ENCODE measurements at regions of chr2 and their contacts with region 1.

Region 1: DNA sequence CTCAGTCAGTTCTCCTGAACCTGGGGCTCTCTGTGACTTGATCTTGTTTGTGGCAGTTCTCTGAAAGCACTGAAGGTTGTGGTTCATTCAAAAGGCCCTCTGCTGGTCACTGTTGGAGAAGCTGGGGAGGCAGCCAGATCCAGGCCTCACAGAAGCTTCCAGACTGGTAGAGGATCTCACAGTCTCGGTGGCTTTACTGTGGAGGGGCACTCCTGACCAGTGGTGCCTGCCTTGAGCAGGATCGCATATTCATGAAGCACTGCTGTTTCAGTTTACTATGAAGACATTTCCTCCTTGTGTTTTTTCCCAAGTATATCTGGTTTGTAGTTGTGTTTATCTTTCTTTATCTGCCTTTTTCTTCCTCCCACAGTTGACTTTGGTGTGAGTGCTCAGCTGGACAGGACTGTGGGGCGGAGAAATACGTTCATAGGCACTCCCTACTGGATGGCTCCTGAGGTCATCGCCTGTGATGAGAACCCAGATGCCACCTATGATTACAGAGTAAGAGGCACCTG is 133.9 kb downstream of the MAP4K4 start:
- DNase-seq: peak; percentile 80
- H3K4me3 ChIP-seq: no peak overlapping the region
- H3K4me3 Mint-ChIP-seq: no peak overlapping the region
- H3K27ac Mint-ChIP-seq: peak overlapping the region; percentile 66
- H3K4me1 ChIP-seq: peaks cover 33% of the 10 kb centered on the region
- H3K4me1 Mint-ChIP-seq: peaks cover 41% of the 10 kb centered on the region
- H3K27me3 ChIP-seq: no peaks in the 10 kb centered on the region
- H3K27me3 Mint-ChIP-seq: no peaks in the 10 kb centered on the region
- CTCF ChIP-seq: peak; percentile 64 to 90

Region 2: GRCh38 chr2:101419096-101419663 is 412.2 kb before region 1 on chr2:
- CTCF ChIA-PET with region 1: no interaction called
- POLR2A ChIA-PET with region 1: no interaction called
- intact Hi-C with region 1: loop called (anchors 1 kb)
- DNase-seq: peak in 1 of 2 experiments; percentile 69
- H3K4me3 ChIP-seq: no peak overlapping the region
- H3K4me3 Mint-ChIP-seq: no peak overlapping the region
- H3K27ac Mint-ChIP-seq: no peak overlapping the region
- H3K4me1 ChIP-seq: no peaks in the 10 kb centered on the region
- H3K4me1 Mint-ChIP-seq: no peaks in the 10 kb centered on the region
- H3K27me3 ChIP-seq: no peaks in the 10 kb centered on the region
- H3K27me3 Mint-ChIP-seq: no peaks in the 10 kb centered on the region
- CTCF ChIP-seq: peak; percentile 61

Measured in Caco-2 (cell line).